B cell (primary cell): ENCODE measurements at regions of chr9 and their contacts with region 1.

Region 1: DNA sequence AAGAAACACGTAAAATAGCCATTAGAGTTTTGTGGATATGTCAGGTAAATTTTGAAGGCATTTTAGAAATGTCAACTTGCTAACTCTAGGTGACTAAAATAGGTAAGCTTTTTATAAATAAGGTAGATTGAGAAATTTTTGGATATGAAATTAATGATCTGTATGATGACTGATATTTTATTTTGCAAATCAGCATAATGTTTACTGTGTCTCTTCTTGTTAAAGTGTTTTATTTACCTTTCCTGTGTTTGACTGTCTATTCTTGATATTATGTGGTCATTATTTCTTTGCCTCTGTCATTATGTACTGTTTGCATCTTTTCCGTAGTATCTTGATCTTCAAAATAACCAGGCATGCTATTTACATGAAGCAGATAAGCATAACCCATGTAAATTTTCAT is 58.4 kb downstream of the ZCCHC7 start:
- DNase-seq: no peak
- ATAC-seq: no peak
- H3K4me3 ChIP-seq: no peak overlapping the region
- H3K4me3 Mint-ChIP-seq: no peak overlapping the region
- H3K27ac ChIP-seq: peak overlapping the region in 1 of 2 donors; percentile 7
- H3K27ac Mint-ChIP-seq: no peak overlapping the region
- H3K4me1 ChIP-seq: peaks cover 9 to 26% of the 10 kb centered on the region in 2 donors
- H3K4me1 Mint-ChIP-seq: peaks cover 49% of the 10 kb centered on the region
- H3K27me3 ChIP-seq: no peaks in the 10 kb centered on the region
- H3K27me3 Mint-ChIP-seq: no peaks in the 10 kb centered on the region
- CTCF ChIP-seq: no peak

Region 2: GRCh38 chr9:37163299-37163698 is 15.4 kb before region 1 on chr9:
- CTCF ChIA-PET with region 1: no interaction called
- POLR2A ChIA-PET with region 1: no interaction called
- intact Hi-C with region 1: loop called (anchors 2 kb)
- DNase-seq: peak; percentile 42
- ATAC-seq: peak; percentile 61
- H3K4me3 ChIP-seq: no peak overlapping the region
- H3K4me3 Mint-ChIP-seq: peak overlapping the region; percentile 61
- H3K27ac ChIP-seq: peak overlapping the region in 1 of 2 donors; percentile 68
- H3K27ac Mint-ChIP-seq: peak overlapping the region; percentile 72
- H3K4me1 ChIP-seq: peaks cover 25 to 38% of the 10 kb centered on the region in 2 donors
- H3K4me1 Mint-ChIP-seq: peaks cover 54% of the 10 kb centered on the region
- H3K27me3 ChIP-seq: no peaks in the 10 kb centered on the region
- H3K27me3 Mint-ChIP-seq: no peaks in the 10 kb centered on the region
- CTCF ChIP-seq: no peak

Region 3: DNA sequence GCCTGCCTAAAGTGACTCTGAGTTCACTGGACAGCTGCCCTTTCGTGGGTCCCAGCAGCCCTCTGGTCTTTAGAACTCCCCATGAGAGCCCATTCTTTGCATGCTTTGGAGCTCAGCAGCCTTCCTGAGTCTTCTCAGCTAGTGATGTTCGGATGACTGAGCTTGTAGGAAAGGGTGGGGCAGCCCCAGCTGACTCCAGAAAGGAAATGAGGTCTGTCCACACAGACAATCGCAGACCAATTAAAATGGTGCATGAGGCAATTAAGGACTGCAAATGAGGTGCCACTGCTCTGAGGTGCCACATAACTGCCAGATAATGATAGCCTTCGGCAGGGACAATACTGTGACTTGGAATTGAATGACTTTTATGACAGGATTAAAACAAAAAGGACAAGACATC is 439.1 kb after region 1 on chr9:
- CTCF ChIA-PET with region 1: no interaction called
- POLR2A ChIA-PET with region 1: no interaction called
- intact Hi-C with region 1: no loop called
- DNase-seq: no peak
- ATAC-seq: no peak
- H3K4me3 ChIP-seq: no peak overlapping the region
- H3K4me3 Mint-ChIP-seq: no peak overlapping the region
- H3K27ac ChIP-seq: no peak overlapping the region
- H3K27ac Mint-ChIP-seq: no peak overlapping the region
- H3K4me1 ChIP-seq: no peaks in the 10 kb centered on the region
- H3K4me1 Mint-ChIP-seq: no peaks in the 10 kb centered on the region
- H3K27me3 ChIP-seq: no peaks in the 10 kb centered on the region
- H3K27me3 Mint-ChIP-seq: peaks cover 8% of the 10 kb centered on the region
- CTCF ChIP-seq: no peak